Breast epithelium (tissue), 4 donors: ENCODE measurements at regions of chr11 and their contacts with region 1.

Region 1: DNA sequence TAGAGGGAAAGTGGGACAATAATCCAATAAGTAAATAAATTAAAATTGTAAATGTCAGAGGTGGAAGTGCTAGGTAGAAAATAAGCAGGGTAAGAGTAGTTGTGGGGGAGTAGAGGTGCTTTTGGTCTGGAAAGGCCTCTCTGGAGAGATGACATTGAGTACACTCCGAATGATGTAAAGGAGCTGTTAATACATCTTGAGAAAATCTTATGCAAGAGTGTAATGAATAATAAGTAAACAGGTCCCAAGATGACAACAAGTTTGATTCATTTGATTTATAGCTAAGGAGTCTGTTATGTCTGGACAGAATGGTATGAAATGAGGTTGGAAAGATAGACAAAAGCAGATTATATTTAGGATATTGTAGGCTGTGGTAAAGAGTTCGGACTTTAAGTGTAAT is 87.5 kb downstream of the TMEM135 start:
- DNase-seq: no peak
- H3K4me3 ChIP-seq: no peak overlapping the region
- H3K27ac ChIP-seq: no peak overlapping the region
- H3K4me1 ChIP-seq: no peaks in the 10 kb centered on the region
- H3K27me3 ChIP-seq: no peaks in the 10 kb centered on the region
- CTCF ChIP-seq: no peak
- POLR2A ChIP-seq: no peak

Region 2: GRCh38 chr11:86081455-86081854 is 1043.8 kb before region 1 on chr11:
- intact Hi-C with region 1: no loop called
- DNase-seq: no peak
- H3K4me3 ChIP-seq: no peak overlapping the region
- H3K27ac ChIP-seq: no peak overlapping the region
- H3K4me1 ChIP-seq: no peaks in the 10 kb centered on the region
- H3K27me3 ChIP-seq: no peaks in the 10 kb centered on the region
- CTCF ChIP-seq: no peak
- POLR2A ChIP-seq: no peak

Region 3: GRCh38 chr11:87022254-87022653 is 103.0 kb before region 1 on chr11:
- intact Hi-C with region 1: no loop called
- DNase-seq: no peak
- H3K4me3 ChIP-seq: no peak overlapping the region
- H3K27ac ChIP-seq: peak overlapping the region in 1 of 2 donors; percentile 24
- H3K4me1 ChIP-seq: no peaks in the 10 kb centered on the region
- H3K27me3 ChIP-seq: no peaks in the 10 kb centered on the region
- CTCF ChIP-seq: no peak
- POLR2A ChIP-seq: no peak

Region 4: DNA sequence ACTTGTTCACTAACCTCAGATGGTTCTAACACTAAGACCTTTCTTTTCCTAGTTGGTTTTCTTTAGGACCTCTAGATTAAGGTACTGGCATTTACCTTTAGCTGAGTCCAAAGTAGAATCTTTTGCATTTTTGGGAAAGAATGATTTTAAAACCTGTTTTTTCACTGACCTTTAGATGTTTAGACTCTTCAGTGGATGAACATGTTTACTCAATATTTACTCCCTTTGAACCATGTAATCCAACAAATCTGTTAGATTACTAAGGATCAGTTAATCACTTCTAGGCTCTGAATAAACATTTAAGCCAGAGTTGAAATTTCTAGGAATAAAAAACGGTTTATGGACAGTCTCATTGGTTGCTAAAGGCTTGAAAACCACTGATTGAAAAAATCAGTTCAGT is 81.4 kb before region 1 on chr11:
- intact Hi-C with region 1: loop called (anchors 5 kb)
- DNase-seq: no peak
- H3K4me3 ChIP-seq: no peak overlapping the region
- H3K27ac ChIP-seq: no peak overlapping the region
- H3K4me1 ChIP-seq: peaks cover 0 to under 1% of the 10 kb centered on the region in 2 donors
- H3K27me3 ChIP-seq: no peaks in the 10 kb centered on the region
- CTCF ChIP-seq: no peak
- POLR2A ChIP-seq: no peak

Region 5: DNA sequence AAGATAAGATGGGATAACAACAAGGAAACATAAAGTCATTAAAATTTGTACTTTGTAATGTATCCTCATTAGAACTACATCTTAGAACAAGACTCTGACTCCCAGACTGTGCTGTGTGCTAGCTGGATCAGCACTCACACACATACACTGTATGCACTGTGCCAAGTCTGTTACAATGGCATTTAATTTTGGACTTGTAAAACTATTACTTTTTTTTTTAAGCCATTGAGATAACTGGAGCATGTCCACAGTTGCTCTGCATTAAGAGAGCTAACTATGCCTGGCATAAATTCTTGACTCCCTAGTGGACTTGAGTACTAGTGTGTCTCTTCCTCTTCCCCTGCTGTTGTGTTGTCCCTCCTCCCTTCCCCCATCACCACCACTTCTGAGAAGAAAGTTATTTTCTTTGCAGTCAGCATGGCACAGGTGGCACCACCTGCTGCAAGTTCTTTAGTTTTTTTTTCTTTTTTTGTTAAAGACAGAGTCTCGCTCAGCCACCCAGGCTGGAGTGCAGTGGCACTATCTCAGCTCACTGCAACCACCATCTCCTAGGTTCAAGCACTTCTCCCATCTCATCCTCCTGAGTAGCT is 181.1 kb after region 1 on chr11:
- intact Hi-C with region 1: loop called (anchors 5 kb)
- DNase-seq: no peak
- H3K4me3 ChIP-seq: no peak overlapping the region
- H3K27ac ChIP-seq: peak overlapping the region in 1 of 2 donors; percentile 49
- H3K4me1 ChIP-seq: no peaks in the 10 kb centered on the region
- H3K27me3 ChIP-seq: no peaks in the 10 kb centered on the region
- CTCF ChIP-seq: no peak
- POLR2A ChIP-seq: no peak